ENCODE measurements at regions of chr14 and their contacts with region 1.

Region 1: DNA sequence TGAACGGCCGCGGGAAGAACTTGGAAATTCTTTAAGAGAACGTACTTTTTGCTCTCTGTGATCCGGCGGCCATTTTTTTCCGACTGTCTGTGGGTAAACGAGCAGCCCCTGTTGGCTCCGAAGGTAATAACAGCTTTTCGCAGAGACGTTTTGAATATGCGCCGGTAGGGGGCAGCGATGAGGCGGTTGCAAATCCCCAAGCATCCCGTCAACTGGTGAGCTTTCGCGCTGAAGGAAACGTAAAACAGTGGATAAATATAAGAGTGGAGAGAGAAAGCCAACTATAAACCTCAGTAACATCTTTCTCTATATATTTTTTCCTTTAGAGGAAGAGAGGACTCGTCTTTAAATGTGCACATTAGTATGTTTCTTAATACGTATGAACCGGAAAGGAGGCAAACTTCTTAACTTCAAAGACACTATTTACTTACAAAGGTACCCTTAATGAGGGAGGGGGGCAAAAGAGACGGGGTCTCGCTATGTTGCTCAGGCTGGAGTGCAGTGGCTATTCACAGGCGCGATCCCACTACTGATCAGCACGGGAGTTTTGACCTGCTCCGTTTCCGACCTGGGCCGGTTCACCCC is 9.6 kb upstream of the NEMF start:
- DNase-seq: no peak
- ATAC-seq: peak; percentile 5
- H3K4me3 ChIP-seq: peak overlapping the region; percentile 79
- H3K27ac ChIP-seq: peak overlapping the region; percentile 99
- H3K4me1 ChIP-seq: peaks cover 8% of the 10 kb centered on the region
- H3K27me3 ChIP-seq: no peaks in the 10 kb centered on the region
- CTCF ChIP-seq: peak; percentile 100
- EP300 ChIP-seq: peak in 1 of 2 experiments; percentile 26; a peak in 1 of 4 replicates
- POLR2A ChIP-seq: no peak
- RAD21 ChIP-seq: peak; percentile 64

Region 2: GRCh38 chr14:49767562-49768300 is 94.5 kb before region 1 on chr14 and contains the start of gene KLHDC2:
- CTCF ChIA-PET with region 1: interaction called, 4 read pairs
- POLR2A ChIA-PET with region 1: interaction called, 7 read pairs
- RAD21 ChIA-PET with region 1: interaction called, 18 read pairs
- SMC1A ChIA-PET with region 1: interaction called, 3 read pairs
- in situ Hi-C with region 1: no loop called
- intact Hi-C with region 1: no loop called
- DNase-seq: no peak
- ATAC-seq: peak; percentile 94
- H3K4me3 ChIP-seq: peak within 1 kb of the TSS; percentile 93
- H3K27ac ChIP-seq: peak within 1 kb of the TSS; percentile 93
- H3K4me1 ChIP-seq: peaks cover 7% of the 10 kb centered on the region
- H3K27me3 ChIP-seq: no peaks in the 10 kb centered on the region
- CTCF ChIP-seq: peak in 1 of 3 experiments; percentile 54; a peak in 2 of 6 replicates
- EP300 ChIP-seq: no peak
- POLR2A ChIP-seq: peak; percentile 81
- RAD21 ChIP-seq: no peak
- polyA plus RNA-seq, gene KLHDC2: 6.0 to 13.3 TPM

Region 3: GRCh38 chr14:49959822-49960408 is 97.7 kb after region 1 on chr14:
- CTCF ChIA-PET with region 1: interaction called, 4 read pairs
- POLR2A ChIA-PET with region 1: interaction called, 3 read pairs
- RAD21 ChIA-PET with region 1: interaction called, 15 read pairs
- SMC1A ChIA-PET with region 1: interaction called, 5 read pairs
- in situ Hi-C with region 1: no loop called
- intact Hi-C with region 1: no loop called
- DNase-seq: peak; percentile 76
- ATAC-seq: peak; percentile 82
- H3K4me3 ChIP-seq: 0 out of 2 replicates have a peak overlapping the region, but pooled peaks have one; percentile 41
- H3K27ac ChIP-seq: peak overlapping the region; percentile 78
- H3K4me1 ChIP-seq: peaks cover 42% of the 10 kb centered on the region
- H3K27me3 ChIP-seq: no peaks in the 10 kb centered on the region
- CTCF ChIP-seq: no peak
- EP300 ChIP-seq: no peak
- POLR2A ChIP-seq: no peak
- RAD21 ChIP-seq: 0 out of 2 replicates have a peak, but pooled peaks have one; percentile 23

Region 4: DNA sequence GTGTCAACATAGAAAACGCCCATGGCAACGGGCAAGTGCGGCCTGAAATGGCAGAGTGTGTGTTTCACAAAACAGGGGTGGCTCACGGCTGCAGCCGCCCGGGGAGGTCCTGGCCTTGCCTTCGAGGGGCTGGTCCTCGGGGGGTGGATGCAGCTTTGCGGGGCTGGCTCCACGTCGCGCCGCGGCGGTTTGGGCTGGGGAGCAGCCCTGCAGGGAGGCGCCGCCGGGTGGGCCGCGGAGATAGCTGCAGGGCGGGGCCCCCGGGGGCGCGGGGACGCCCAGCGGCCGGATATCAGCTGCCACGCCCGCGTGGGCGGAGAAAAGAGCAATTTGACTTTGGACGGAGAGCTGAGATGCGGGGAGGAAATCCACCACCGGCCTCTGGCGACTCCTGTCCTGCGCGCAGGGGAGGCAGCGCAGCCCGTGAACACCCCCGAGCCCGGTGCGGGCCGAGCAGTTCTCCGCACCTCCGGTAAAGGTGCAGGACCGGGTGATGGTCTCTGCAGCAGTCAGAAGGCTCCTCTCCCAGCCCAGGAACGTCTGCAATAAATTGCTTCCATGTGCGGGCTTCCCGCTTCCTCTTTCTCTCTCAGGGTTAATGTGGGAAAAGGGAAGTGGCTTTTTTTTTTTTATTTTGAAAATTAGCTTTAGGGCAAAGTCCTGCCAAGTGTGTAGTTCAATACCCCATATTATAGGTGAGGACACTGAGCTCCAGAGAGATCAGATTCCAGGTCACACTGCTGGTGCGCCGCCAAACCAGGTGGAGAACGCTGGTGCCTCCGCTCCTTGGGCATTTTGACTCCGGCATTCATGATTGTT is 141.2 kb after region 1 on chr14:
- CTCF ChIA-PET with region 1: interaction called, 82 read pairs
- POLR2A ChIA-PET with region 1: interaction called, 60 read pairs
- RAD21 ChIA-PET with region 1: interaction called, 80 read pairs
- SMC1A ChIA-PET with region 1: interaction called, 48 read pairs
- in situ Hi-C with region 1: no loop called
- intact Hi-C with region 1: loop called (anchors 2 kb)
- DNase-seq: peak; percentile 60
- ATAC-seq: peak; percentile 52
- H3K4me3 ChIP-seq: peak overlapping the region; percentile 61
- H3K27ac ChIP-seq: peak overlapping the region; percentile 99
- H3K4me1 ChIP-seq: peaks cover 44% of the 10 kb centered on the region
- H3K27me3 ChIP-seq: no peaks in the 10 kb centered on the region
- CTCF ChIP-seq: peak; percentile 11 to 30 (median 19); a peak in 3 of 6 replicates
- EP300 ChIP-seq: peak in 1 of 2 experiments; percentile 5; a peak in 3 of 4 replicates
- POLR2A ChIP-seq: peak; percentile 85
- RAD21 ChIP-seq: 0 out of 2 replicates have a peak, but pooled peaks have one; percentile 31

Region 5: DNA sequence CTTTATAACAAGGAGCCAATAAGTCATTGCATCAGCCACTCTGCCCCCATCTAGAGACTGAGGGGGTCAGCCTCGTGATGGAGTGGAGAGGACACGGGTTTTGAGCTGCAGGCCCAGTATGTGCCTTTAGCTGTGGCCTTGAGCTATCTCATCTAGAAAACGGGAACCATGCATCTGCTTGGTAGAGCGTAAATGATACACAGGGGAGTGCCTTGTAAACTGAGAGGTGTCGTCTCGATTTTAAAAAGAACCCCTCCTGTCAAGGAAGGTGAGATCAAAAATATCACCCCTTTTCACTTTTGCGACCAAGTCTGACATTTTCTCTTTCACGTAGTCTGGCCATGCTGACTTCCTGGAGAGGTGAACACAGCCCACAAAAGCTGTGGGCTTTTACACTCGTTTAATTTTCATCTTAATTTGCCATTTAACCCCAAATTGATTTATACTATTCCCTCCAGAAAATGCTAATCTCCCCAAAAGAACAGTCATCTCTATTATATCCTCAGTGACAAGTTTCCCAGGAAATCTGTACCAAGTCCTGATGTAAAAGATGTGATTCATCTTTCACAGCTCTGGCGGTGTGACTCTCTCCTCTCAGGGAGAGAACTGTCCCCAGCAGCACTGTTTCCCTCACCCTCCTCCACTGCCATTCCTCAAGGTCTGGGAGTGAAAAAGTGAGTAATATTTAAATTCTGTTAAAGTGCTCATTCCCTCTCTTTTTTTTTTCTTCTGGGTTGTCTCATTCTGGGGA is 223.6 kb after region 1 on chr14:
- CTCF ChIA-PET with region 1: interaction called, 34 read pairs
- POLR2A ChIA-PET with region 1: interaction called, 16 read pairs
- RAD21 ChIA-PET with region 1: interaction called, 37 read pairs
- SMC1A ChIA-PET with region 1: interaction called, 31 read pairs
- in situ Hi-C with region 1: loop called (anchors 10 kb)
- intact Hi-C with region 1: loop called (anchors 1 kb)
- DNase-seq: peak; percentile 95
- ATAC-seq: peak; percentile 73
- H3K4me3 ChIP-seq: peak overlapping the region; percentile 38; the same call in 1 of the 2 replicates
- H3K27ac ChIP-seq: peak overlapping the region; percentile 95
- H3K4me1 ChIP-seq: peaks cover 68% of the 10 kb centered on the region
- H3K27me3 ChIP-seq: no peaks in the 10 kb centered on the region
- CTCF ChIP-seq: no peak
- EP300 ChIP-seq: peak; percentile 85 to 91
- POLR2A ChIP-seq: peak; percentile 48; the same call in 1 of the 2 replicates
- RAD21 ChIP-seq: no peak

Region 6: GRCh38 chr14:50231475-50232275 is 369.5 kb after region 1 on chr14 and contains the start of gene SOS2:
- CTCF ChIA-PET with region 1: interaction called, 4 read pairs
- POLR2A ChIA-PET with region 1: no interaction called
- RAD21 ChIA-PET with region 1: no interaction called
- SMC1A ChIA-PET with region 1: no interaction called
- in situ Hi-C with region 1: no loop called
- intact Hi-C with region 1: loop called (anchors 5 kb)
- DNase-seq: peak; percentile 43
- ATAC-seq: peak; percentile 91
- H3K4me3 ChIP-seq: peak within 1 kb of the TSS; percentile 75
- H3K27ac ChIP-seq: peak within 1 kb of the TSS; percentile 73
- H3K4me1 ChIP-seq: no peaks in the 10 kb centered on the region; the same call in 1 of the 2 replicates
- H3K27me3 ChIP-seq: no peaks in the 10 kb centered on the region
- CTCF ChIP-seq: no peak
- EP300 ChIP-seq: no peak
- POLR2A ChIP-seq: peak; percentile 88
- RAD21 ChIP-seq: no peak
- polyA plus RNA-seq, gene SOS2: 2.9 to 4.1 TPM